ENCODE measurements at regions of chr1 and their contacts with region 1.

Region 1: DNA sequence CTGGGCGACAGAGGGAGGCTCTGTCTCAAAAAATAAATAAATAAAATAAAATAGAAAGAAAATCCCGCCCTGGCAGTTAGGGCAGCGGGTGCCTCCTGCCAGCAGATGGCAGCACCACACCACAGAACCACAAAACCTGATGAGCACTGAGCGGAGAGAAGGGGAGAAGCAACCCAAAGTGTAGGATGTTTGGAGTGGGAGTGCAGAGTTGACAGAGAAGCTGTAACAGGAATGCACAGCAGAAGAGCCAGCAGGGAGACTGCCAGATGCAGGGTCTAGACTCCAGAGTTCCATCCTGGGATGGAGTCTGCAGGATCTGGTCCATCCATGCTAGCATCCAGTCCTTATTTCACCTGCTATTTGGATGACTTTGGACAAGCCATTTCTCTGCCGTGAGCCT is 29.7 kb upstream of the KIRREL1 start:
- DNase-seq: peak; percentile 74
- H3K4me3 Mint-ChIP-seq: no peak overlapping the region
- H3K27ac Mint-ChIP-seq: no peak overlapping the region
- H3K4me1 Mint-ChIP-seq: no peaks in the 10 kb centered on the region
- H3K27me3 Mint-ChIP-seq: peaks cover 5% of the 10 kb centered on the region

Region 2: DNA sequence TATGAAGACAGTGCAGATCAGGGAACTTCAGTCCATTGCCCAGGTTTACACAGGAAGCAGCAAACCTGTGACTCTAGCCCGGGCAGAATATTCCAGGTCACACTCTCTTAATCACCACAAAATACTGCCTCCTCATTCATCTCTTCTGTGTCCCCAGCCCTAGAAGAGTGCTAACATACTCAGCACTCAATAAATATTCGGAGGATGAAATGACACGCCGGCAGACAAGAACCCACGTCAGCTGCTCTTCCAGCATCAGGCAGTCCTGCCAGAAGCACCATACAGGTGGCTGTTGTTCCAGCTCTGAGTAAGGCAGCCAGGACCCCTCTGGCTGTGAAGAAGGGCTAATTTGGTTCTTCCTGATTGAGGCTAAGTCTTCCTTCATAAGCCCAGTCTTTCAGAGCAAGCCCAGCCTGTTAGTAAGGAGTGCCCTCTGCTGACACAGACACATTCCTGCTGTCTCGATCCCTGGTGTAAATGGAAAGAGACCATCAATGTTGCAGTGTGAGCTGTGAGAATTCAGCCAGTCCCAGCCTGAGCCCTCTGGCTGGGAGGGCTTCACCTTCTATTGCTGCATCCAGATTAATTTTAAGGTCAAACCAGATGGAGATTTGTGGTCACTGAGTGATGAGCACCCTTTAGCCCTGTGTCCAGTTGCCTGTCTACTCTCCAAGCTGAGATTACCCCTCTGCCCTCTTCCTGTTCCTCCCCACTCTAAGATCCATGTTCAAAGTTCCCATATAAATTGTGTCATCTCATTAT is 15.2 kb before region 1 on chr1:
- CTCF ChIA-PET with region 1: interaction called, 12 read pairs
- intact Hi-C with region 1: no loop called
- DNase-seq: peak; percentile 26
- H3K4me3 Mint-ChIP-seq: no peak overlapping the region
- H3K27ac Mint-ChIP-seq: no peak overlapping the region
- H3K4me1 Mint-ChIP-seq: no peaks in the 10 kb centered on the region
- H3K27me3 Mint-ChIP-seq: peaks cover 9% of the 10 kb centered on the region

Region 3: DNA sequence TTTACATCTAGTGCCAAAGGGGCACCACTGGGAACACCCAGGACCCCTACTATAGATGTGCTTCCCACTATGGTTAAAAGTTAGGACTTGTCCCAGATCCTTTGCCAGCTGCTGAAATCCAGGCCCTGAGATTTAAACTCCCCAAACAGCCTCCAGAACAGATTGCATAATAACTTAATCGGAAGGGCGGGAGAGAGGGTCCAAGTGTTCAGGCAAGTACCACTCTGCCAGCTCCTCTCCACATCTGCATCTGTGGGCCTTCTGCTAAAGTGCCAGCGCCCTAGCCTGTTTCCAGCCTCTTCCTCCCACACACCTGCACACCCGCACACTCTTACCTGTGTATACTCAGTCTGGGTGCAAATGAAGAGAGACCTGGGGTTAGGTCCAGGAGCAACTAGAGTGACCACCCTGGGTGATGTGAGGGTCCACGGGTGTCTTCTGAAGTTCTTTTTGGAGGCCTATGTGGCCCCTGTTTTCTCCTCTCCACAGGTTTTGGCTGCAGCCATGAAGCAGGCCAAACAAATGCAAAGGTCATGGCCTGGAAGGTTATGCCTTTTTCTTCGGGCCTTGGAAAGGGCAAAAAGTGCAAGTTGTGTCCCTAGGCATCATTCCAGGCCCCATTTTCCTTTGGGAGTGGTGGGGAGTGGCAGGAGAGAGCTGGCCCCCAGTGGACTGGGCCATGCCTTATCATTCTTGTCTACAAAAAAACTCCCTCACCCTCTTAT is 59.0 kb after region 1 on chr1:
- CTCF ChIA-PET with region 1: no interaction called
- intact Hi-C with region 1: no loop called
- DNase-seq: no peak
- H3K4me3 Mint-ChIP-seq: no peak overlapping the region
- H3K27ac Mint-ChIP-seq: no peak overlapping the region
- H3K4me1 Mint-ChIP-seq: no peaks in the 10 kb centered on the region
- H3K27me3 Mint-ChIP-seq: peaks cover 7% of the 10 kb centered on the region

Region 4: GRCh38 chr1:158035976-158036583 is 72.4 kb after region 1 on chr1:
- CTCF ChIA-PET with region 1: interaction called, 4 read pairs
- intact Hi-C with region 1: loop called (anchors 2 kb)
- DNase-seq: peak; percentile 31
- H3K4me3 Mint-ChIP-seq: no peak overlapping the region
- H3K27ac Mint-ChIP-seq: no peak overlapping the region
- H3K4me1 Mint-ChIP-seq: no peaks in the 10 kb centered on the region
- H3K27me3 Mint-ChIP-seq: peaks cover 2% of the 10 kb centered on the region

Region 5: DNA sequence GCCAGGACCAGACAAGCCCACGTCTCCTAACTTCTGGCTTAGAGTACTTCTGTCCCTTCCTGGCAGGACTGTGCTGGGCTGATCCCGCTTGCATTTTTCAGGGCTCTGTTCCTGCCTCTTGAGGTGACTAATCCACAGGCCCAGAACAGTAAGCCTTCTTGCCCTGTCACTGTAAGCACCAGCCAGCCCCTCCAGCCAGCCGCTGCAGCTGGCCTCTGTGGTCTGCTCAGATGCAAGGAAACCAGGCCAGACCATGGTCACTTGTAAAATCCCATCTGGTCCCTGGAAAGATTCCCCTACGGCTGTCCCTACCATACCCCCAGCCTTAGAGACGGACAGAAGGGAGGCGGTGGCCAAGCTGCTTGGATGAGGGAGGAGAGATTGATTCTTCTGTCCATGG is 103.9 kb after region 1 on chr1:
- CTCF ChIA-PET with region 1: no interaction called
- intact Hi-C with region 1: no loop called
- DNase-seq: no peak
- H3K4me3 Mint-ChIP-seq: no peak overlapping the region
- H3K27ac Mint-ChIP-seq: no peak overlapping the region
- H3K4me1 Mint-ChIP-seq: no peaks in the 10 kb centered on the region
- H3K27me3 Mint-ChIP-seq: peaks cover 13% of the 10 kb centered on the region

Region 6: GRCh38 chr1:158087320-158087927 is 123.7 kb after region 1 on chr1:
- CTCF ChIA-PET with region 1: no interaction called
- intact Hi-C with region 1: loop called (anchors 1 kb)
- DNase-seq: peak; percentile 54
- H3K4me3 Mint-ChIP-seq: no peak overlapping the region
- H3K27ac Mint-ChIP-seq: no peak overlapping the region
- H3K4me1 Mint-ChIP-seq: no peaks in the 10 kb centered on the region
- H3K27me3 Mint-ChIP-seq: peaks cover 2% of the 10 kb centered on the region